Aorta (tissue), 5 donors: ENCODE measurements at regions of chr20 and their contacts with region 1.

Region 1: DNA sequence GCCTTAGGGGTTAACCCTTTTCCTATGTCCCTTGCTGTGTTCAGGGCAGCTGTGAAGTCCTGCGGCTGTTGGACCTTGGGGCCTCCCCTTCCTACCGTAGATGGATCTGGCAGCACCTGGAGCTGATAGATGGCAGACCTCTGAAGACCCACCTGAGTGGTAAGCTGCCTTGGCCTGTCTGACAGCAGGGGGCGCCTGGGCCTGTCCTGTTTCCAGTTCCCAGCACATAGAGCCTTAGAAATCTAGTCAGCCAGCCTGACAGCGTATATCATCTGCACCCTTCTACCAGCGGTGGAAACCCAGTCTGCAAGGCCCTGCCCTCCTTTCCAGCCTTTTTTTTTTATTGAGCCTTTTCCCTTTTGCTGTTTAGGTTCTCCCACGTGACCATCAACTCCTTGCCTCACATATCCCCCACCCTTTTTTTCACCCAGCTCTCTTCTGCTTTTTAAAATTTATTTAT is 26.6 kb downstream of the CNBD2 start:
- DNase-seq: peak; percentile 89 to 94
- ATAC-seq: peak; percentile 92
- H3K4me3 ChIP-seq: no peak overlapping the region
- H3K27ac ChIP-seq: no peak overlapping the region
- H3K4me1 ChIP-seq: no peaks in the 10 kb centered on the region
- H3K27me3 ChIP-seq: no peaks in the 10 kb centered on the region

Region 2: GRCh38 chr20:36064658-36065426 is 69.8 kb after region 1 on chr20:
- intact Hi-C with region 1: loop called in 1 of 2 experiments (anchors 10 kb)
- DNase-seq: peak; percentile 97 to 99
- ATAC-seq: peak; percentile 98
- H3K4me3 ChIP-seq: peak overlapping the region; percentile 12 to 51
- H3K27ac ChIP-seq: peak overlapping the region in 1 of 2 donors; percentile 11
- H3K4me1 ChIP-seq: no peaks in the 10 kb centered on the region
- H3K27me3 ChIP-seq: no peaks in the 10 kb centered on the region

Region 3: DNA sequence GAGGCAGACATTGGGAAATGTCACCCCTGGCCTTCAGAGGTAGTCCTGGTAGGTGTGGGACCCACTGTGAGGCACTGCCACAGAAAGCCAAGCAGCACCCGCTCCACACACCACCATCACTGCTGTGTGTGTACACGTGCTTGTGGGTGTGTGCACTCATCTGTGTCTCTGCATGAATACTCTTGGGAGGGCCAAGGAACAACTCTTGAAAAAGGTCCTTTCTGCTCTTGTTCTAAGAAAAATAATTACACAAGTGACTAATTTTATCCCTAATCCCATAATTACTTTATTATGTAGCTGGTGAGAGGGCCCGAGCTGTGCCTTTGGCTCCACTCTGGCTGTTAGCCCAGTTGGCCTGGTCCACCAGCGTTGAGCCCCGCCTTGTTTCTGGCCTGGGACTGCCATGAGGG is 137.8 kb after region 1 on chr20:
- intact Hi-C with region 1: loop called (anchors 1 kb)
- DNase-seq: no peak
- ATAC-seq: no peak
- H3K4me3 ChIP-seq: no peak overlapping the region
- H3K27ac ChIP-seq: no peak overlapping the region
- H3K4me1 ChIP-seq: no peaks in the 10 kb centered on the region
- H3K27me3 ChIP-seq: no peaks in the 10 kb centered on the region